ENCODE measurements at regions of chr2 and their contacts with region 1.

Region 1: DNA sequence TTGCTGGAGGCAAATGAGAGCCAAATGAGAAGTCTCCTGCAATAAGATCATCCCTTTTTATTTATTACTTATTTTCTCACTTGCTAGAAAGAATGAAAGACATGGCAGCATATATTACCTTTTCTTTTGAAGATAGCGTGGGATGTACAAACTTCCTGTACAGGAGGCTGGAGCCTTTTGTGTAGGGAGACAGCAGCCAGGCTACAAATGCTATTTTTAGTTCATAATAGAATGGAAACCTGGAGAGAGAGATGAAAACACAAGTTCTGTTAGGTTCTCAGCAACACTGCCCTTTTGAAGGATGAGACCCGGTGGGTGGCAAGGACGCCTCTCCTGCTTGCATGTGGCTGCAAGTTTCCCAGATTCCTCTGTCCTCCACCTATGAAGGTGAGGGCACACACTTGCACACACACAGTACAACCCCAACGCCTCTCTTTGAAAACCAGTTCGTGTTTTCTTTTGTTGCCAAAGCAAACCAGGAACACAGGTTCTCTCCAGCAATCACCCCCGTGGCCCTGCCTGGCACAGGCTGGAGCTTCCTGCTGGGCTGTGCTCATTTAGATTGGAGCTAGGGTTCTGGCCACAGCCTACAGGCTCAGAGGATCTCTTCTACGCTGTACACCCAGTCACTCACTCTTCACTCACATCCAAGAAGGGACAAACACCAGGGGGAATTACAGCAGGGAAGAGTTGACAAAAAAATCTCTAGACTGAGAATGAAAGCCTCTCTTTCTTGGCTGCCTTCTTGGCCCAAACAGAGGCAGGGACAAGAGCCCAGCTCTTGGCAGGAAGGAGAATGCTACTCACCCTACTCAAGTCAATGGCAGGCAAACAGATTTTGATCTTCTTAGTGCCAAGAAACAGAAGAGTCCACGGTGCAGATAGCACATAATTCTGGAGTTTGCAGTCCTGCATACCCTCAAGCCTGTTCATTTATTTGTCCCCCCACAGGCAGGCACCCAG is 55.6 kb downstream of the MRPL35 start:
- DNase-seq: no peak

Region 2: GRCh38 chr2:86283411-86284030 is 28.7 kb after region 1 on chr2:
- intact Hi-C with region 1: loop called (anchors 2 kb)
- DNase-seq: no peak

Region 3: DNA sequence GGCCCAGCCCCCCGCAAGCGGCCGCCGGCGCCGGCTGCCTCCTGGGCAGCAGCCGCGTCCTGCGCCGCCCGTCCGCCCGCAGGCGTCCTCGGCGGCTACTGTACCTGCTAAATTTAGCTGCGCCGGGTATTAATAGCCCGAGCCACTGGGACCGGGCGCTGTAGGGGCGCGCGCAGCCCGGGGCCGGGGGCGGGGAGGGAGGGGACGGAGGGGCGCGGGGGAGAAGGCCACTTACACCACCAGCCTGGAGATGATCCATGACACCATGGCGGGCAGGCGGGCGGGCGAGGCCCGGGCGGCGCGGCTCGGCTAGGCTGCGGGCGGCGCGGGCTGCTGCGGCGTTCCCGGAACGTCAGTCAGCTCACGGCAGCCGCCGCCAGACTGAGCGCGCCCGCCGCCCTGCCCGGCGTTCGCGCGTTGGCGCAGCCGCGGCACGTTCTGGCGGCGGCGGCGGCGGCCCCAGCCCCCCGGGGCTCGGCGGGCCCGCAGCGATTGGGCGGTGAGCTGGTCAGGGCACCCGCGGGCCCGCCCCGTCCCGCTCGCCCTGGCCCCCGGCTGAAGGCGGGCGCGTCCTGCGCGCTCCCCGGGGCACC is 82.5 kb after region 1 on chr2 and contains the start of gene REEP1:
- intact Hi-C with region 1: no loop called
- DNase-seq: no peak
- total RNA-seq, gene REEP1: 21.7 TPM